A549 (cell line): ENCODE measurements at regions of chr16 and their contacts with region 1.

Region 1: DNA sequence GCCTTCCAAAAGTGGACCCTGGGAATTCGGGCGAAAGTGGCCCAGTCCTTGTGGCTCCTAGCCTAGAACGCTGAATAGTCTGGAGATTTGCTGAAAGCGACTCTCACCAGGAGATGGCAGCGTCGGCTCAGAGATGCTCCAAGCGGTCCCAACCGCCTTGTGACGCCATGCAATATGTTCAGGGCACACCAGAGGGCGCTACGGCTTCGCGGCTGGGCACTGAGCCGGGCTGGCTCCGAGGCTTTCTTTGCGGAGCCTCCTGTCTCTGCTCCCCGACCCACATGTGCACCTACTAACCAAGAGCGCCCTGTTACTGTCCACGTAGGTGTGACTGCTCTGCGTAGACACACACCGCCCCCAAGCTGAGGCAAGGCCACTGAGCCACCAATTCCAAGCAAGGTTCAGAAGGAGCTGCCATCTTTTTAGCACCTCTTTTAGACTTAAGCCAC is 36.9 kb downstream of the SYCE1L start:
- DNase-seq: peak; percentile 60 to 84
- ATAC-seq: peak; percentile 94 to 97
- H3K4me3 ChIP-seq: no peak overlapping the region
- H3K27ac ChIP-seq: peak overlapping the region; percentile 57 to 68; a peak in 4 of 6 replicates
- H3K4me1 ChIP-seq: peaks cover 9% of the 10 kb centered on the region; the same call in 2 of the 3 replicates
- CTCF ChIP-seq: peak; percentile 100
- EP300 ChIP-seq: no peak
- POLR2A ChIP-seq: no peak
- RAD21 ChIP-seq: peak; percentile 100

Region 2: DNA sequence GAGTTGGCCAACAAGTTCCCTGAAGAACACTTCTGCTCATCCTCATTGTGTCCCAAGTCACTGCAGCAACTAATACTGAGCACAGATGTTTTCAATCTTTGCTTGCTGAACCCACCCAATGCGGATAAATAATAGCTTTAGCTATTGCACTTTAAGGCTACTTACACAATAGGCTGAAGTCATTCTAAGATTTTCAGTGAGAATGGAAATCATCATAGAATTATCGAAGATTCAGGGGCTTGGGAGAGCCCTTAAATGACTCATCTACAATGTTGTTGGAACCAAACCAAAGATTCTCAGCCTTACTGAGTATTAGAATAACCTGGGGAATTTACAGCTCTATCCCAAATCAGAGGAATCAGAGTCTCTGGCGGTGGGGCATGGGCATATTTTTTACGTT is 14.3 kb after region 1 on chr16:
- CTCF ChIA-PET with region 1: interaction called, 16 read pairs
- POLR2A ChIA-PET with region 1: no interaction called
- DNase-seq: no peak
- ATAC-seq: no peak
- H3K4me3 ChIP-seq: no peak overlapping the region
- H3K27ac ChIP-seq: no peak overlapping the region
- H3K4me1 ChIP-seq: no peaks in the 10 kb centered on the region
- CTCF ChIP-seq: no peak
- EP300 ChIP-seq: no peak
- POLR2A ChIP-seq: no peak
- RAD21 ChIP-seq: no peak

Region 3: GRCh38 chr16:77299395-77299794 is 63.3 kb after region 1 on chr16:
- CTCF ChIA-PET with region 1: interaction called, 10 read pairs
- POLR2A ChIA-PET with region 1: no interaction called
- DNase-seq: no peak
- ATAC-seq: no peak
- H3K4me3 ChIP-seq: no peak overlapping the region
- H3K27ac ChIP-seq: peak overlapping the region; percentile 63 to 79
- H3K4me1 ChIP-seq: peaks cover 73% of the 10 kb centered on the region
- CTCF ChIP-seq: no peak
- EP300 ChIP-seq: no peak
- POLR2A ChIP-seq: no peak
- RAD21 ChIP-seq: no peak

Region 4: GRCh38 chr16:77564791-77565390 is 328.8 kb after region 1 on chr16:
- CTCF ChIA-PET with region 1: interaction called, 19 read pairs
- POLR2A ChIA-PET with region 1: no interaction called
- DNase-seq: peak in 1 of 2 experiments; percentile 14
- ATAC-seq: no peak
- H3K4me3 ChIP-seq: no peak overlapping the region
- H3K27ac ChIP-seq: no peak overlapping the region
- H3K4me1 ChIP-seq: peaks cover 4% of the 10 kb centered on the region; the same call in 1 of the 3 replicates
- CTCF ChIP-seq: no peak
- EP300 ChIP-seq: no peak
- POLR2A ChIP-seq: no peak
- RAD21 ChIP-seq: no peak

Region 5: GRCh38 chr16:77584205-77584859 is 348.2 kb after region 1 on chr16:
- CTCF ChIA-PET with region 1: interaction called, 475 read pairs
- POLR2A ChIA-PET with region 1: interaction called, 3 read pairs
- DNase-seq: peak; percentile 43 to 66
- ATAC-seq: peak; percentile 69 to 82; a peak in 4 of 6 replicates
- H3K4me3 ChIP-seq: no peak overlapping the region
- H3K27ac ChIP-seq: peak overlapping the region in 1 of 2 experiments; percentile 47; a peak in 1 of 6 replicates
- H3K4me1 ChIP-seq: peaks cover 27% of the 10 kb centered on the region; the same call in 2 of the 3 replicates
- CTCF ChIP-seq: peak; percentile 98
- EP300 ChIP-seq: no peak
- POLR2A ChIP-seq: no peak
- RAD21 ChIP-seq: peak; percentile 97 to 99

Region 6: DNA sequence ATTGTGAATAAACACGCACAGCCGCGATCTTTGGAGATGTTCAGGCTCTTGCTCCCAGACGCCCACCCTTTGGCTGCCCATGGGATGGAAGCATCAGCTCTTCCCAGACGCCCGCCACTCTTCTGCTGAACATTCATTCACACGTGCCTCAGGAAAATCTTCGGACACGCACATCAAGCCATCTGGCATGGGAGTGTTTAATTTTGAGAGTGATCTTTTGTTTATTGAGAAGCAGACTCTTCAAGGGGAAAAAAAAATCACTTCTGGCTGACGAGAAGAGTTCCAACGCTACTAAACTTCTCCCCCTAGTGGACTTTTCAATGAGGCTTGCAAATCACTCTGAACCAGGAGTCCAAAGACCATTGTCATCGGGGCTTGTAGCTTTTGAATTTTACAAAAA is 424.2 kb after region 1 on chr16:
- CTCF ChIA-PET with region 1: interaction called, 104 read pairs
- POLR2A ChIA-PET with region 1: no interaction called
- DNase-seq: peak; percentile 33 to 36
- ATAC-seq: peak; percentile 81 to 83; a peak in 5 of 6 replicates
- H3K4me3 ChIP-seq: no peak overlapping the region
- H3K27ac ChIP-seq: no peak overlapping the region
- H3K4me1 ChIP-seq: no peaks in the 10 kb centered on the region
- CTCF ChIP-seq: peak; percentile 65
- EP300 ChIP-seq: no peak
- POLR2A ChIP-seq: no peak
- RAD21 ChIP-seq: peak; percentile 67 to 75